HepG2 (cell line): ENCODE measurements at regions of chr6 and their contacts with region 1.

Region 1: GRCh38 chr6:119129148-119129967 is 50.9 kb upstream of the FAM184A start:
- DNase-seq: peak; percentile 76
- ATAC-seq: peak; percentile 80
- H3K4me3 ChIP-seq: peak overlapping the region in 1 of 3 experiments; percentile 6; a peak in 1 of 6 replicates
- H3K27ac ChIP-seq: peak overlapping the region; percentile 35
- H3K4me1 ChIP-seq: peaks cover 43% of the 10 kb centered on the region
- H3K27me3 ChIP-seq: no peaks in the 10 kb centered on the region
- CTCF ChIP-seq: peak; percentile 82
- EP300 ChIP-seq: no peak
- POLR2A ChIP-seq: no peak
- RAD21 ChIP-seq: peak; percentile 62

Region 2: GRCh38 chr6:119110601-119111548 is 18.5 kb before region 1 on chr6:
- CTCF ChIA-PET with region 1: no interaction called
- POLR2A ChIA-PET with region 1: no interaction called
- in situ Hi-C with region 1: no loop called
- intact Hi-C with region 1: no loop called
- DNase-seq: peak; percentile 69
- ATAC-seq: peak; percentile 93
- H3K4me3 ChIP-seq: peak overlapping the region in 2 of 3 experiments; percentile 12 to 41; a peak in 1 of 6 replicates
- H3K27ac ChIP-seq: no peak overlapping the region
- H3K4me1 ChIP-seq: peaks cover 17% of the 10 kb centered on the region
- H3K27me3 ChIP-seq: no peaks in the 10 kb centered on the region
- CTCF ChIP-seq: peak; percentile 88
- EP300 ChIP-seq: no peak
- POLR2A ChIP-seq: no peak
- RAD21 ChIP-seq: peak; percentile 86

Region 3: DNA sequence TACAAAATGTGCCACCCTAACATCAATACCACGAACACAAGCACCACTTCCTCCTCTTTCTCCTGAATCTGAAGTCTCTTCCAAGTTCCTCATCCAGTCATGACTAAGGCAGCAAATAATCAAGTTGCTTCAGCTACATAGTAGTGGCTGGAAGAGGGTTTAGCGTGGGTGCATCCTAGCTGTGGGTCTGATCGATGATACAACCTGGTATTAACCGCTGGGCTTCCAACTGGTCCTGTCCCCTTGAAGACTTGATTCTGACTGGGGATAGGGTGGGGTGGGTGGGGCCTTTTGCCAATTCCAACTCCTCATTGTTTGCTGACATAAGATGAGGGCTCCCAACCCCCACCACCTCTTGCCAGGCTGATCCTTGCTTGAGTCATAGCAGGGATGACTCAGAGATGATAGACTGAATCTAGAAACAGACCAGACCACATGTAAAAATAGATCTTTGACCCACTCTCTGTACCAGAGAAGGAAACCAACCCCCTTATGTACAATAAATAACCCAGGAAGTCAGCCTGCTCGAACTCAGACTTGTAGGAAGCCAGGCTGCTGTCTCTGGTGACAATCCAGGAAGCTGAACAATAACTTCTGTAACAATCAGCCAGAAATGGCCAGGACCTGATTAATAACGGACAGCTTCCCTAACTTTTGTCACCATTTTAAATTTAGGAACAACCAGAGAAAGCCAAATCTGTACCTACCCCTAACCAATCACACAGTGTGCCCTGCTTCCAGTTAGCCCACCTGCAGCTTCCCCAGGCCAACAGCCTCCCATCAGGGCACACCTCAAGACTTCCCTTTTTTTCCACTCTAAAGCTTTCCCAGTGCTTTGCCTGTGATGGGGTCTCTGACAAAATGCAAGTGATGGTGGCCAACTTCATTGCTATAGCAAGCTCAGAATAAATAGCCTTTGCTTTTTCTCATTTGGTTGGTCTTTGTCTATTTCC is 18.0 kb after region 1 on chr6:
- CTCF ChIA-PET with region 1: interaction called, 11 read pairs
- POLR2A ChIA-PET with region 1: interaction called, 9 read pairs
- in situ Hi-C with region 1: no loop called
- intact Hi-C with region 1: loop called (anchors 1 kb)
- DNase-seq: peak; percentile 92
- ATAC-seq: peak; percentile 82
- H3K4me3 ChIP-seq: no peak overlapping the region
- H3K27ac ChIP-seq: peak overlapping the region; percentile 46
- H3K4me1 ChIP-seq: peaks cover 59% of the 10 kb centered on the region
- H3K27me3 ChIP-seq: no peaks in the 10 kb centered on the region
- CTCF ChIP-seq: no peak
- EP300 ChIP-seq: peak in 1 of 2 experiments; percentile 85; a peak in 2 of 4 replicates
- POLR2A ChIP-seq: no peak
- RAD21 ChIP-seq: no peak

Region 4: GRCh38 chr6:119172824-119173223 is 43.5 kb after region 1 on chr6:
- CTCF ChIA-PET with region 1: interaction called, 6 read pairs
- POLR2A ChIA-PET with region 1: interaction called, 5 read pairs
- in situ Hi-C with region 1: no loop called
- intact Hi-C with region 1: loop called (anchors 1 kb)
- DNase-seq: peak; percentile 67
- ATAC-seq: no peak
- H3K4me3 ChIP-seq: no peak overlapping the region
- H3K27ac ChIP-seq: peak overlapping the region; percentile 74
- H3K4me1 ChIP-seq: peaks cover 83% of the 10 kb centered on the region
- H3K27me3 ChIP-seq: no peaks in the 10 kb centered on the region
- CTCF ChIP-seq: no peak
- EP300 ChIP-seq: peak in 1 of 2 experiments; percentile 39; a peak in 1 of 4 replicates
- POLR2A ChIP-seq: no peak
- RAD21 ChIP-seq: no peak

Region 5: GRCh38 chr6:119186490-119186889 is 57.1 kb after region 1 on chr6:
- CTCF ChIA-PET with region 1: no interaction called
- POLR2A ChIA-PET with region 1: no interaction called
- in situ Hi-C with region 1: no loop called
- intact Hi-C with region 1: loop called (anchors 5 kb)
- DNase-seq: no peak
- ATAC-seq: peak; percentile 27
- H3K4me3 ChIP-seq: no peak overlapping the region
- H3K27ac ChIP-seq: no peak overlapping the region
- H3K4me1 ChIP-seq: no peaks in the 10 kb centered on the region
- H3K27me3 ChIP-seq: no peaks in the 10 kb centered on the region
- CTCF ChIP-seq: no peak
- EP300 ChIP-seq: no peak
- POLR2A ChIP-seq: no peak
- RAD21 ChIP-seq: no peak

Region 6: GRCh38 chr6:119261945-119262286 is 132.6 kb after region 1 on chr6:
- CTCF ChIA-PET with region 1: interaction called, 3 read pairs
- POLR2A ChIA-PET with region 1: interaction called, 3 read pairs
- in situ Hi-C with region 1: no loop called
- intact Hi-C with region 1: loop called (anchors 1 kb)
- DNase-seq: peak; percentile 72
- ATAC-seq: peak; percentile 69
- H3K4me3 ChIP-seq: no peak overlapping the region; a peak in 1 of 6 replicates
- H3K27ac ChIP-seq: peak overlapping the region; percentile 80
- H3K4me1 ChIP-seq: peaks cover 86% of the 10 kb centered on the region
- H3K27me3 ChIP-seq: no peaks in the 10 kb centered on the region
- CTCF ChIP-seq: peak; percentile 54
- EP300 ChIP-seq: no peak
- POLR2A ChIP-seq: no peak
- RAD21 ChIP-seq: 0 out of 2 replicates have a peak, but pooled peaks have one; percentile 27

Region 7: GRCh38 chr6:119978274-119978889 is 849.0 kb after region 1 on chr6:
- CTCF ChIA-PET with region 1: interaction called, 3 read pairs
- POLR2A ChIA-PET with region 1: no interaction called
- in situ Hi-C with region 1: loop called (anchors 25 kb)
- intact Hi-C with region 1: no loop called
- DNase-seq: peak; percentile 15
- ATAC-seq: peak; percentile 83
- H3K4me3 ChIP-seq: no peak overlapping the region
- H3K27ac ChIP-seq: no peak overlapping the region
- H3K4me1 ChIP-seq: no peaks in the 10 kb centered on the region
- H3K27me3 ChIP-seq: no peaks in the 10 kb centered on the region
- CTCF ChIP-seq: peak; percentile 48
- EP300 ChIP-seq: no peak
- POLR2A ChIP-seq: no peak
- RAD21 ChIP-seq: no peak